A673 (cell line): ENCODE measurements at regions of chr18 and their contacts with region 1.

Region 1: DNA sequence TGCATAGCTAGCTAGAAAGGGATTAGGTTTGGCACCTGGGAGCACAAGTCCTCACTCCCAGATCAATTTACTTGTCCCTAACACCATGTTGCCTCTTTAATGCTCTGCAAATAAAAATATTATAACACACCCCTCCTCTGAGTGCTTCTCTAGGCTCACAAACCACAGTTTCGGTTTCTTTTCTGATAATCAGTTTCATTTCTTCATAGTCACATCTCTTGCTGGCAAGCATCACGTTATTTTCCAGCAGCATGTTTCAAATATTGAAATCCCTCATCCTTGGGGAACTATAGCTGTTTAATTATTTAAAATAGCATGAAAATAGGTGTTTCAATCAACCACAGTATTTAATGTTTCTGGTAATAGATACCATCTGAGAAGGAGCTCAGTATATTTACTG is 13.9 kb upstream of the SMCHD1 start:
- DNase-seq: no peak
- H3K4me3 ChIP-seq: no peak overlapping the region
- H3K27ac ChIP-seq: no peak overlapping the region
- H3K4me1 ChIP-seq: no peaks in the 10 kb centered on the region
- H3K27me3 ChIP-seq: no peaks in the 10 kb centered on the region
- CTCF ChIP-seq: no peak

Region 2: GRCh38 chr18:2571200-2572143 is 70.2 kb before region 1 on chr18 and contains the starts of genes METTL4 and NDC80:
- CTCF ChIA-PET with region 1: interaction called, 13 read pairs
- POLR2A ChIA-PET with region 1: no interaction called
- intact Hi-C with region 1: no loop called
- DNase-seq: peak; percentile 92
- H3K4me3 ChIP-seq: peak within 1 kb of the TSS; percentile 88
- H3K27ac ChIP-seq: peak within 1 kb of the TSS; percentile 99
- H3K4me1 ChIP-seq: peaks cover 23% of the 10 kb centered on the region
- H3K27me3 ChIP-seq: no peaks in the 10 kb centered on the region
- CTCF ChIP-seq: no peak
- total RNA-seq, gene METTL4: 20.1 and 26.4 TPM in 2 replicates
- total RNA-seq, gene NDC80: 72.6 and 73.5 TPM in 2 replicates

Region 3: GRCh38 chr18:2716394-2717326 is 75.0 kb after region 1 on chr18:
- CTCF ChIA-PET with region 1: no interaction called
- POLR2A ChIA-PET with region 1: no interaction called
- intact Hi-C with region 1: no loop called
- DNase-seq: no peak
- H3K4me3 ChIP-seq: no peak overlapping the region
- H3K27ac ChIP-seq: no peak overlapping the region
- H3K4me1 ChIP-seq: no peaks in the 10 kb centered on the region
- H3K27me3 ChIP-seq: no peaks in the 10 kb centered on the region
- CTCF ChIP-seq: no peak